WTC11 (cell line): ENCODE measurements at regions of chr7 and their contacts with region 1.

Region 1: DNA sequence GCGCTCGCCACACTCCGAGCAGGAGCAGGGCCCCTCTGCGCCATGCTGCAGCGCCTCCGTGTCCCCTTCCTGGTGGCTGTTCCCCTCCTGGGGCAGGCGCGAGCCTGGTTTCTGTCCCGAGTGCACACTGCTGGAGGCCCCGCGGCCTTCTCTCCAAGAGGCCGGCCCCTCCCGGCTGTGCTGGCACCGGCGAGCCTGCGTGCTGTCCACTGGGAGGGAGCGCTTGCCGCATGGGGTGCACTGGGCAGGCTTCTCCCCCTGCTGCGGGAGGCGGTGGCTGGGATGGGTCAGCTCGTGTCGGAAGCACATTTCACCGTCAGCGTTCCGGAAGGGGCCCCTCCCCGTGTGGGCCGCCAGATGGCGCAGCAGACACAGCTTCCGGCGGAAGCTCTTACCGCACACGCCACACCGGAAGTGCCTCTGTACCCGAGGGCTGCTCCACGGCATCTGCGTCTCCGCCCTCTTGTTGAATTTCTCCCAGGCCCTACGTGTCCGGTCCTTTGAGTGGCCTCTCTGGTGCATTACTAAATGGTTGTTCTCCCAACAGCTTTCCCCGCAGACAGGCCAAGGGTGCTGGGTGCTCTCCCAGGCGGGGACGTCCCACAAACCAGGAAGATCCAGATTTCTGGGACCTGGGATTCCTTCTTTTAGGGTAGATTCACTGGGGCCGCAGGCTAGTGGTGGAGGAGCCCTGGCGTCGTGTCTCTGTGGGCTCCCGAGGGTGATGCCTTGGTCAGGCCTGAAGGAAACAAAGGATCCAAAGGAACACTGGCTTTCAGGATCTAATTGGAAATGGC is 18.7 kb downstream of the ZNF786 start:
- DNase-seq: peak; percentile 88
- ATAC-seq: peak; percentile 94
- H3K4me3 Mint-ChIP-seq: no peak overlapping the region
- H3K27ac Mint-ChIP-seq: peak overlapping the region; percentile 34; the same call in 1 of the 2 replicates
- H3K4me1 Mint-ChIP-seq: peaks cover 7% of the 10 kb centered on the region; the same call in 1 of the 2 replicates
- H3K27me3 Mint-ChIP-seq: no peaks in the 10 kb centered on the region
- CTCF ChIP-seq: peak; percentile 71

Region 2: DNA sequence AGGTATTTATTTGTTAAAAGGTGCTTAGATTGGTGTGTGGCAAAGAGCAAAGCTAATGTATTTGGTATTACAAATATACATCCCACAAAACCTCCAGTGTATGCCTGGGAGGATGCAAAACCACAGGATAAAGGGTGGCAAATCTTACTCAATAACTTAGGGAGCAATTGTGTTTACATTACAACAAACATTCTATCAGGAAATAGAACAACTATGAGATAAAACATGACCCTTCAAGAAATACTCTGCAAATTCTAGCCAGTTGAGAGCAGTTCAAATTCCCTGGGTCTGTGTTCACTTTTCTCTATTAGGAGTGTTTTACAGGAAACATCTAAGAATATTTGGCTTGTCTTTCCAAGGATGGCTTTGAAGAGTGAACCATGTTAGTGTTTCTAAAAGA is 308.2 kb before region 1 on chr7:
- CTCF ChIA-PET with region 1: no interaction called
- POLR2A ChIA-PET with region 1: no interaction called
- DNase-seq: no peak
- ATAC-seq: no peak
- H3K4me3 Mint-ChIP-seq: no peak overlapping the region
- H3K27ac Mint-ChIP-seq: no peak overlapping the region
- H3K4me1 Mint-ChIP-seq: peaks cover 5% of the 10 kb centered on the region
- H3K27me3 Mint-ChIP-seq: no peaks in the 10 kb centered on the region
- CTCF ChIP-seq: no peak

Region 3: DNA sequence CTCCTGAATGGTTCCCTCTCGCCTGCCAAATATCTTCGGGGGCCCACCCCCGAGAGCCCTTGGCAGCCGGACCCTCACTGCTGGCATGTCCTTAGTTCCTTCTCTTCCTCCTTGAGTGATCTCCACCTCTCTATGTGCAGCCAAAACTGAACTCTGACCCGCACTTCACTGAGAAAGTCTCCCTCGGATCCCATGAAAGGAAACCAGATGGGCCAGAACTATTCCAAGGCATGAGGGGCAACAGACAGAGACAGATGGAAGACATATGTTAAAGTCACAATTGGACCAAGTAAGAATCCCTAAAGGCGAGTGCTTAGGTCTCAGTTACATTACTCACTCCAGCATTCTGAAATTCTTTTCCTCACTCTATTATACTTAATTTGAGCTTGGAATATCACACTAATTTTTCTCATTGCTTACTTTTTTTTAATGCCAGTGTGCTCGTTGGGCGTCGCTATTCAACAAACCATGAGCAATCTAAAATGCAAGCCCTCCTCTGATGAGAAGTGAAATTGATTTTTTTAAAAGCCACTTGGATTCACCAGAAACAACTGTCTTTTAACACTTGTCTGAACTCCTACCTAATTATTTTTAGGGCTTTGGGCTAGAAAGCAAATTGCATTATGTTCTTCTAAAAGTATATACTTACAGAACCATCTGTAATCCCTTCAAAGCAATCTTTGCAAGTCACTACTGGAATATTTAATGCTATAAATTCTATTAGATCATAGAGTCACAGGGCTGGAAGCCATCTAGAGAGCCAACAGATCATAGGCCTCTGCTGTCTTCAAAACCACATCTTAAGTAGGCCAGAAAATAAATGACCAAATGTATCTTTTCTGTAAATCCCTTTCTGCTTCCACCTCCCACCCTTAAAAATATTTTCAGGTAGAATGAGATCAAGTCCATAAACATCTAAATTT is 144.5 kb before region 1 on chr7:
- CTCF ChIA-PET with region 1: no interaction called
- POLR2A ChIA-PET with region 1: no interaction called
- DNase-seq: no peak
- ATAC-seq: no peak
- H3K4me3 Mint-ChIP-seq: no peak overlapping the region
- H3K27ac Mint-ChIP-seq: no peak overlapping the region
- H3K4me1 Mint-ChIP-seq: peaks cover 7% of the 10 kb centered on the region
- H3K27me3 Mint-ChIP-seq: no peaks in the 10 kb centered on the region
- CTCF ChIP-seq: no peak

Region 4: DNA sequence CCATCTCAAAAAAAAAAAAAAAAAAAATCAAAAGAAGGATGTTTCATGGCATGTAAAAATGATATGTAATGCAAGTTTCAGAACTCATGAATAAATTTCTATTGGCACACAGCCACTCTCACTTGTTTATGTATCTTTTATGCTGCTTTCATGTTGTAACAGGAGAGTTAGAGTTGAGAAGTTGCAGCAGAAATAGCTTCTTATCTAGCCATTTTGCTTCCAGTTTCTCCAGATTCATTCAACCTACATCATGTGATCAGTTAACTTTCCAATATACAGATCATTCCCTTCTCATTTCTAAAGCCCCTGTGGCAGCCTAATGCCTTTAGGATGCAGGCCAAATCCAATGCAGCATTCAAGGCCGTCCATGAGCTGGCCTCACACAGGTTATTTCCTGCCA is 11.7 kb before region 1 on chr7:
- CTCF ChIA-PET with region 1: interaction called, 15 read pairs
- POLR2A ChIA-PET with region 1: no interaction called
- DNase-seq: no peak
- ATAC-seq: no peak
- H3K4me3 Mint-ChIP-seq: no peak overlapping the region
- H3K27ac Mint-ChIP-seq: peak overlapping the region; percentile 84; the same call in 1 of the 2 replicates
- H3K4me1 Mint-ChIP-seq: peaks cover 5% of the 10 kb centered on the region
- H3K27me3 Mint-ChIP-seq: no peaks in the 10 kb centered on the region
- CTCF ChIP-seq: no peak

Region 5: GRCh38 chr7:149125863-149126661 is 54.2 kb after region 1 on chr7 and contains the start of gene ZNF425:
- CTCF ChIA-PET with region 1: interaction called, 18 read pairs
- POLR2A ChIA-PET with region 1: interaction called, 4 read pairs
- DNase-seq: peak; percentile 94
- ATAC-seq: peak; percentile 87
- H3K4me3 Mint-ChIP-seq: peak within 1 kb of the TSS; percentile 100
- H3K27ac Mint-ChIP-seq: peak within 1 kb of the TSS; percentile 100
- H3K4me1 Mint-ChIP-seq: peaks cover 23% of the 10 kb centered on the region
- H3K27me3 Mint-ChIP-seq: peaks cover 5% of the 10 kb centered on the region; the same call in 1 of the 2 replicates
- CTCF ChIP-seq: peak; percentile 89
- total RNA-seq, gene ZNF425: 3.8 to 5.8 TPM (median 4.9 TPM) in 3 replicates

Region 6: DNA sequence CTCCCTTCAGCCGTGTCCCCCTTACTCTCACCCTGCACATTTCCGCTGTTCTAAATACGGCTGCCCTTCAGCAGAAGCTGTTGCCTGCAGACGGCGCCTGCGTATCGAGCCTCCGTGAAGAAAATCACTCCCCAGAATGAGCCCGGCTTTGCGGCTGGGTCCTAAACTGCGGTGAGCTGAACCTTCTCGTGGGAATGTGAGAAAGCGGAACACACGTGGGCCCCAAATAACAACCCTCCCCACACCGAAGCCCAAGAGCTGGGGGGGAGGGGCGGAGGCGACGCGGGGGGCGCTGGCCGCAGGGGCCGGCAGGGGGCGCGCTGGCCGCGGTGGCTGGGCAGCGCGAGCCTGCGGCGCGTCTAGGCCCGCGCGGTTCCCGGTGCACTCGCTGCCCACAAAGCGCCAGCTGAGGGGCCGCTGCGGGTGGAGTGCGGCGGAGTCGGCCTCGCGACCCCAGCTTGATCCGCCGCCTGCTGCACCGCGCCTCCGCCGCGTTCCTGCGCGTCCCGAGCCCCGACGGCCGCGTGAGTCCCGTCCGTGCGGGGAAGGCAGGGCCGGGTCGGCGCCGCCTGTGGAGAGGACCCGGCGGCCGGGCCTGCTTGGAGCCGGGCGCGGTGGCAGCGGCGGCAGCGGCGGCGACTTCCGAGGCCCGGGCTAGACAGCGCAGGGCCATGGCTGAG is 75.4 kb after region 1 on chr7 and contains the start of gene ZNF398:
- CTCF ChIA-PET with region 1: interaction called, 14 read pairs
- POLR2A ChIA-PET with region 1: no interaction called
- DNase-seq: peak; percentile 65
- ATAC-seq: peak; percentile 34
- H3K4me3 Mint-ChIP-seq: peak within 1 kb of the TSS; percentile 91
- H3K27ac Mint-ChIP-seq: peak within 1 kb of the TSS; percentile 99
- H3K4me1 Mint-ChIP-seq: peaks cover 62% of the 10 kb centered on the region
- H3K27me3 Mint-ChIP-seq: no peaks in the 10 kb centered on the region
- CTCF ChIP-seq: peak; percentile 88
- total RNA-seq, gene ZNF398: 57.8 to 63.2 TPM (median 58.9 TPM) in 3 replicates

Region 7: DNA sequence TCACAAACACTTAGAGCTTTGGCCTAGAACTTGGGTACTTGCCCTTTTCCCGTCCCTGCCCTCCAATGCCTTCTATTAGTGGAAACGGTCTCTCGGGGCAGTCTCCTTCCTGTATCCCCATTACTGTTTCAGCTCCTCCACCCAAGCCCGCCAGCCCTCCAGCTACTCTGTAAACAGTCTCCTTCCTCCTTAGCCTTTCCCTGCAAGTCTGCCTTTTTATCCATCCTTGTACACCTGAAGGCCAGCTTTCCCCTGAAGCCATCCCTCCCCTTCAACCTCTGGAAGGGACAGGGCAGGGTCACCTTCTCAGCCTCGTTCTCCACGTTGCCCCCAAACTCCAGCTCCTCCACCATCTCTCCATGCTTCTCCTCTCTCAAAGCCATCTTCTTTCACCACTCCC is 533.9 kb after region 1 on chr7:
- CTCF ChIA-PET with region 1: no interaction called
- POLR2A ChIA-PET with region 1: no interaction called
- DNase-seq: no peak
- ATAC-seq: no peak
- H3K4me3 Mint-ChIP-seq: no peak overlapping the region
- H3K27ac Mint-ChIP-seq: no peak overlapping the region
- H3K4me1 Mint-ChIP-seq: no peaks in the 10 kb centered on the region
- H3K27me3 Mint-ChIP-seq: no peaks in the 10 kb centered on the region
- CTCF ChIP-seq: no peak